ENCODE measurements at regions of chr15 and their contacts with region 1.

Region 1: DNA sequence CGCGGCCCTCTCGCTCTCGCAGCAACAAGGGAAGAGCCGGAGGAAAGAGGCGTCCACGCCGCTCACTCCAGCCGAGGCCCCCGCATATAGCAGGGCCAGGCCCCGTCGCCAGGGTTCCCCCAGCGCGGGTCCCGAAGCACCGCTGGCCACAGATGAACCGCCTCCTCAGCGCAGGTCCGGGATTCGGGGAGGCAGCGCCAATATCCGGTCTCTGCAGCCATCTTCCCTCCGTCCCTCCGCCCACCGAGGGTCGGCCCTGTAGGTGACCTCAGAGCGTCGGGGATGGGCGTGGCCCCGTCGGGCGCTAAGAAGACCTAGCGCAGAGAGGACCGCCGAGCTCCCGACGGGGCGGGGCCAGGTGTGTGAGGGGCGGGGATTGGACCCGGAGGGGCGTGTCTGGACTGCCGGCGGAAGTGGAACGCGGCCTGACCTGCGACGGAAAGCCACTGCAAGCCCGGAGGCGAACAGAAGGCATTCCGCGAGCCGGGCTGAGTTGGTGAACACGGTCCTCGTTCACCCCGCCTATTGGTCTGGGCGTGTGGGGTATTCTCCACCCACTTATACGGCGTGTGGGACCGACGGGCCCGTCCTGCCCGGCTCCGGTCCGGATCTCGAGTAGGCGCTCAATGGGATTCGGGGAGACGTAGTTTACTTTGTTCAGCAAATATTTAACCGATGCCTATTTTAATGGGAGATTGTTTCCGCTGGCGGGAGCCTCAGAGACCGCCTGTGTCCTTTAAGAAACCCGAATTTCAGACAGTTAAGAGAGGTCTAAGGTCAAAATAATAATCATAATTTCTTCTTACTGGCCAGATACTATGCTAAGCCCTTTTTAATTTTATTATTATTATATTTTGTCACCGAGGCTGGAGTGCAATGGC is 26.9 kb upstream of the MTHFS start:
- DNase-seq: peak; percentile 99
- H3K4me3 Mint-ChIP-seq: peak overlapping the region; percentile 89
- H3K27ac Mint-ChIP-seq: peak overlapping the region; percentile 93
- H3K4me1 Mint-ChIP-seq: peaks cover 30% of the 10 kb centered on the region
- H3K27me3 Mint-ChIP-seq: no peaks in the 10 kb centered on the region

Region 2: DNA sequence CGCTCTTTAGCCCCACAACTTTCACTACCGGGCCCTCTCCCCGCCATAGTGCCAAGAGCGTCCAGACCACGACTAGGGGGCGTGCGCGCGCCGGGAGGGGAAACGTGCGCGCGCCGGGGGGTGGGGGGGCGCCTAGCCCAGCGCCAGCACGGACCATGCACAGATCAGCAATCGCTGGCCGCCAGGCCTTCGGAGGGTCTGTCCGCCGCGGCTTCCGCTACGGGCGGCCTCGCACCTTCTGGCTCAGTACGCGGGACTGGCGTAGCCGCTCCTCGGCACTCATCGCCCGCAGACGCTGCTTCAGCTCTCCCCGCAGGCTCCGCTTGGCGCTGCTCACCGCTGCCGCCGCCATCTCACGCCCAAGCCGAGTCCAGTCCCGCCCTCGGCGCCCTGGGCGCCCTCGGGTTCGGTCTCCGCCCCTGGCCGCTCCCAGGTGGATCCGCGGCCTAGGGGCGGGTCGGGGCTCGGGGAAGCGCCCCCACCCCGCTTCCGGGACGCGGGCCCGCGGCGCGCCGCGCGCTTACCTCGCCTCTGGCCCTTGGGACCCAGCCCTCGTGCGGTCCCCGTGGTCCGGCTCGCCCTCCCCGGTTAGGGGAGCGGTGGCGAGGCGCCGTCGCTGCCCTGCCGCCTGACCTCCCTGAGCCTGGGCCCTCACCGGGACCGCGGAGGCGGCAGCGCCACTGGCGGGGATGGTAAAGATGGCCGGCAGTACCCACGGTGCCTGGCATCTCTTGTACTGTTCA is 26.9 kb before region 1 on chr15 and contains the start of gene MTHFS:
- CTCF ChIA-PET with region 1: interaction called, 19 read pairs
- POLR2A ChIA-PET with region 1: interaction called, 129 read pairs
- DNase-seq: peak; percentile 80
- H3K4me3 Mint-ChIP-seq: peak within 1 kb of the TSS; percentile 100
- H3K27ac Mint-ChIP-seq: peak within 1 kb of the TSS; percentile 99
- H3K4me1 Mint-ChIP-seq: peaks cover 48% of the 10 kb centered on the region
- H3K27me3 Mint-ChIP-seq: no peaks in the 10 kb centered on the region
- total RNA-seq, gene MTHFS: 20.2 to 22.6 TPM

Region 3: GRCh38 chr15:79970624-79971434 is 47.1 kb after region 1 on chr15 and contains the start of gene BCL2A1:
- CTCF ChIA-PET with region 1: interaction called, 7 read pairs
- POLR2A ChIA-PET with region 1: interaction called, 106 read pairs
- DNase-seq: peak; percentile 59
- H3K4me3 Mint-ChIP-seq: peak within 1 kb of the TSS; percentile 83
- H3K27ac Mint-ChIP-seq: peak within 1 kb of the TSS; percentile 76
- H3K4me1 Mint-ChIP-seq: peaks cover 59% of the 10 kb centered on the region
- H3K27me3 Mint-ChIP-seq: no peaks in the 10 kb centered on the region
- total RNA-seq, gene BCL2A1: 12.3 to 14.1 TPM

Region 4: GRCh38 chr15:80003171-80003570 is 79.4 kb after region 1 on chr15:
- CTCF ChIA-PET with region 1: no interaction called
- POLR2A ChIA-PET with region 1: no interaction called
- DNase-seq: no peak
- H3K4me3 Mint-ChIP-seq: no peak overlapping the region
- H3K27ac Mint-ChIP-seq: no peak overlapping the region
- H3K4me1 Mint-ChIP-seq: no peaks in the 10 kb centered on the region
- H3K27me3 Mint-ChIP-seq: no peaks in the 10 kb centered on the region

Region 5: GRCh38 chr15:80058851-80059785 is 135.4 kb after region 1 on chr15 and contains the start of gene ZFAND6:
- CTCF ChIA-PET with region 1: no interaction called
- POLR2A ChIA-PET with region 1: interaction called, 20 read pairs
- DNase-seq: peak; percentile 96
- H3K4me3 Mint-ChIP-seq: peak within 1 kb of the TSS; percentile 84
- H3K27ac Mint-ChIP-seq: peak within 1 kb of the TSS; percentile 90
- H3K4me1 Mint-ChIP-seq: peaks cover 48% of the 10 kb centered on the region
- H3K27me3 Mint-ChIP-seq: peaks cover 5% of the 10 kb centered on the region
- total RNA-seq, gene ZFAND6: 46.7 to 48.7 TPM

Region 6: DNA sequence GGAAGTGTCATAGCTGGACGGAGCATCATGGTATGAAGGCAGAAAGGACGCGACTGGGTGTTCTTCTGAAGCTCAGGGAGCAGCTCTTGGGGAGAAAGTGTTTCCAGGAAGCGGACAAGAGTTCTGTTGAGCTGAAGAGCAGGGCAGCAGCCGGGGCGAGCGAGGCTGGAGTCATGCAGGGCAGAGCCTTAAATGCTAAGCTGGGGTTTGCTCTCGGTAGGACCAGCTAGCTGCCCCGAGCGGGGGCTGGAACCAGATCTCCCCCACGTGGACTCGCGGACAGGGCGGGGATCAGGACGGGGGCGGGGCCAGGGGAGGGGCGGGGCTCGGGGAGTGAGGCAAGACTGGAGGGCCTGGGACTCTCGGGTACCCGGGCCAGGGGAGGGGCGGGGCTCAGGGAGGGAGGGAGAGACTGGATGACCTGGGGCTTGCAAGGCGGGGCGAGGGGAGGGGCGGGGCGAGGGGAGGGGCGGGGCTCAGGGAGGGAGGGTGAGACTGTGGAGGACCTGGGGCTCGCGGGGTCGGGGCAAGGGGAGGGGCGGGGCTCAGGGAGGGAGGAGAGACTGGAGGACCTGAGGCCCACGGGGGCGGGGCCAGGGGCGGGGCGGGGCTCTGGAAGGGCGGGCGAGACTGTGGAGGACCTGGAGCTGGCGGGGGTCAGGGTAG is 228.6 kb after region 1 on chr15:
- CTCF ChIA-PET with region 1: no interaction called
- POLR2A ChIA-PET with region 1: interaction called, 10 read pairs
- DNase-seq: peak; percentile 95
- H3K4me3 Mint-ChIP-seq: peak overlapping the region; percentile 76
- H3K27ac Mint-ChIP-seq: peak overlapping the region; percentile 47
- H3K4me1 Mint-ChIP-seq: peaks cover 33% of the 10 kb centered on the region
- H3K27me3 Mint-ChIP-seq: peaks cover 10% of the 10 kb centered on the region